Upper lobe of right lung (tissue), 1 donor: ENCODE measurements at regions of chr5 and their contacts with region 1.

Region 1: GRCh38 chr5:170633235-170634081 is 129.6 kb downstream of the KCNIP1 start:
- DNase-seq: peak; percentile 60
- ATAC-seq: peak; percentile 44
- H3K4me3 ChIP-seq: peak overlapping the region; percentile 29
- H3K27ac ChIP-seq: peak overlapping the region; percentile 75
- H3K4me1 ChIP-seq: peaks cover 26% of the 10 kb centered on the region
- H3K27me3 ChIP-seq: no peaks in the 10 kb centered on the region
- CTCF ChIP-seq: no peak

Region 2: GRCh38 chr5:170434966-170435605 is 198.4 kb before region 1 on chr5:
- intact Hi-C with region 1: loop called (anchors 5 kb)
- DNase-seq: peak; percentile 77
- ATAC-seq: peak; percentile 90
- H3K4me3 ChIP-seq: no peak overlapping the region
- H3K27ac ChIP-seq: no peak overlapping the region
- H3K4me1 ChIP-seq: no peaks in the 10 kb centered on the region
- H3K27me3 ChIP-seq: no peaks in the 10 kb centered on the region
- CTCF ChIP-seq: peak; percentile 98